ENCODE measurements at regions of chr4 and their contacts with region 1.

Region 1: DNA sequence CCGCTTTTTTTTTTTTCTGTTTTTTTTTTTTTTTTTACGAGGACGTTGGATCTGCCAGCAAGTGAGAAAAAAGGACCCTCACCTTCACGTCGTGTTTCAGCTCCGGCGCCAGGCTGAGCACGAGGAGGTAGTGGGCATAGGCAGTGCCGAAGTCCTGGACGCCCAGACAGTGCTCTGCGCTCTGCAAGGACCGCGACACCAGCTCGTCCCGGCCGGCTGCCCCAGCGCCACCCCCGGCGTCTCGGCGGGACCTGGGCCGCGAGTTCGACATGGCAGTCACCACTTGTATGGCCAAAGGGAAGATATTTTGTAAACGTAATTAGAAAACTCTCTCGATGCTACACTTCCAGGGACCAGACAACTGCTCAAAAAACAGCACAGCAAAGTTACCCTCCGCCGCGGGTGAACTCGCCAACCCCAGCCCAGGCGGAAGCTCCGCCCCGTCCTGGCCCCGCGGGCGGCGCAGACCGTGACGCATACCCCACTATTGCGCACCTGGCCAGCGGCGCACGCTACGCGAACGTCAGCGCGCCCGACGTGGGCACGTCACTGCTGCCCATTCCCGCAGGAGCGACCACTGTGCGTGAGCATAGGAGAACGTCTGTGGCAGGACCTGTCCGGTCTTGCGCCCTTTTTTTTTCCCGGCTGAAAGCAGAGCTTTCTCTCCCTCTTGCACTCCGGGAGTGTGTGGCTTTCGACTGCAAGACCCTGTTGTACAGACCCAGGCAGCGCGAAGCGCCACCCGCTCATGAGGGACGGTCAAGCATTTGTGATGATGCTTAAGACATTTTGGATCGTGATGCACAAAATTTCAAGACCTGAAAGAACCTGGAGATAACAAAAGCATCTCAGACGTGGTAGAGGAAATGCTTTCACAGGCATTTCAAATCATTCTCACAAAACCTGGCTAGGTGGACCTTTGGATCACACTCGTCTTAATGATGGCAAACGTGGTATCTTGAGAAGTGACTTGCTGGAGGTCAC is at the start of gene PRMT9:
- DNase-seq: peak; percentile 91
- ATAC-seq: peak; percentile 98
- H3K4me3 Mint-ChIP-seq: peak within 1 kb of the TSS; percentile 89
- H3K27ac Mint-ChIP-seq: peak within 1 kb of the TSS; percentile 92
- H3K4me1 Mint-ChIP-seq: peaks cover 24% of the 10 kb centered on the region
- H3K27me3 Mint-ChIP-seq: peaks cover 5% of the 10 kb centered on the region
- CTCF ChIP-seq: no peak
- total RNA-seq, gene PRMT9: 7.4 to 8.8 TPM

Region 2: DNA sequence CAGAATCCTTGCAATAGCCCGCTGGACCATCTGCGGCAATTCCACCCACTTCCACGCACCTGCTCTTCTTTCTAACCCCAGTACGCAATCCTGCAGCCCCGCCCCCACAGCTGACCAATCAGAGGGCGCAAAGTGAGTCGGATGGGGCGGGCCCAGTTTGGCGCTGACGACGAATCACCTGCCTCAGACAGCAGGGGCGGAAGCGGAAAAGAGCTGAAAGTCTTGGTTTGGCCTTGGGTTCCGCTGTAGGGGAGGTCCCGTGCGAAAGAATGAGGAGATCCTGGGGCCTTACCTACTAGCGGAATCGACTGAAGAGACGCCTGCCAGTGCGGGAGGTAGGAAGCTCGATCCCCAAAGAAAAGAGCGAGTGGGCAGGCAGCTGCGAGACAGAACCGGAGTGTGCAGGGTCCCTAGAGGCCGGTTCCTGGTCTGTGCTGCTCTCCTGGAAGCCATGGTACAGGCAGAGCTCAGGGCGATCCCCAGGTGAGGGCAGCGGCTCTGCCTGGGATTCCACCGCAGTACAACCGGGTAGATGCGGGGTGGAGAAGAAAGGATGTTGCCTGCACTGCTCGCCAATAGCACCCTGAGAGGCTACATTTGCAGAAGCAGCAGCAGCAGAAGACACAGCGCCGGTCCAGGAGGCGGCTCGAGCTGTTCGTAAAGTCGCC is 66.7 kb before region 1 on chr4 and contains the start of gene TMEM184C:
- CTCF ChIA-PET with region 1: interaction called, 7 read pairs
- POLR2A ChIA-PET with region 1: interaction called, 10 read pairs
- intact Hi-C with region 1: loop called (anchors 5 kb)
- DNase-seq: peak; percentile 99
- ATAC-seq: peak; percentile 99
- H3K4me3 Mint-ChIP-seq: peak within 1 kb of the TSS; percentile 95
- H3K27ac Mint-ChIP-seq: peak within 1 kb of the TSS; percentile 95
- H3K4me1 Mint-ChIP-seq: peaks cover 29% of the 10 kb centered on the region
- H3K27me3 Mint-ChIP-seq: no peaks in the 10 kb centered on the region
- CTCF ChIP-seq: no peak
- total RNA-seq, gene TMEM184C: 13.2 to 18.4 TPM